Motor neuron (in vitro differentiated cells): ENCODE measurements at regions of chr12 and their contacts with region 1.

Region 1: GRCh38 chr12:98909749-98910148 is 264.7 kb downstream of the APAF1 start:
- ATAC-seq: peak in 1 of 8 experiments; percentile 35
- H3K4me3 ChIP-seq: no peak overlapping the region
- H3K27ac ChIP-seq: no peak overlapping the region
- H3K4me1 ChIP-seq: peaks cover 4 to 13% of the 10 kb centered on the region in 2 donors

Region 2: DNA sequence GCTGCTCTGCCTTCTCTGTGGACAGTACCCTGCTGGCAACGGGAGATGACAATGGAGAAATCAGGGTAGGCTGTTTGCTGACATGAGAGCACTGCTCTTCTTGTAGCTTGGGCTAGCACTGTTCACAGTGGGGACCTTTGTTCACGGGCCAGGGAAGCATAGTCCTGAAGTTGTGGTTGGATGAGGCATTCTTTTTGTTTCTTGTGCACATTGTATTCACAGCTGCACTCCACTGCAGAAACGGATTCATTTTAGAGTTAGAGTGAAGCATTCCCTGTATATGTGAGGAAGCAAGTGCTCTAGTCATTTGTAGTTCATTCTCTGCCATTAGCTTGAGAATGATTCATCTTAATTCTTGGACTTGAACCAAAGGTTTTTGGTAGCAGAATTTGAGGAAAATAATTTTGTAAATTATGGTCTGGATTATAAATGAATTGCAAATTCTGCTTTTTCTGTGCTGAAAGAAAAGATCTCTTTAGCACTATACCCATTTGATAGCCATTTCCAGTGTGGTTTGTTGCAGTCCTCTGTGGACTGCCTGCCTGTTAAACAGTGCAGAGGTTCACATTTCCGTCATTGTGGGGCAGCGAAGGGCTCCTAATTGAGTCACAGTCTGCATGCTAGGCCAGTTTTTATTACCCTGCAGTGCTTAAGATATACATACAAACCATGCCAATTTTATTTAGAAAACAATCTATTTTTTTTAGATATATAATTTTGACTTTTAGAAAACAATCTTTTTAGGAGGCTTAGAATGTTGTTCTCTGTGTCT is 184.1 kb before region 1 on chr12:
- in situ Hi-C with region 1: loop called in 1 of 9 experiments (anchors 25 kb)
- ATAC-seq: peak; percentile 59 to 98 (median 94)
- H3K4me3 ChIP-seq: no peak overlapping the region
- H3K27ac ChIP-seq: no peak overlapping the region
- H3K4me1 ChIP-seq: no peaks in the 10 kb centered on the region